PC-9 (cell line): ENCODE measurements at regions of chr2 and their contacts with region 1.

Region 1: GRCh38 chr2:215705771-215706361 is 270.0 kb upstream of the FN1 start:
- DNase-seq: no peak
- H3K4me3 ChIP-seq: no peak overlapping the region
- H3K27ac ChIP-seq: no peak overlapping the region
- H3K4me1 ChIP-seq: 0 out of 2 replicates have a peak, but pooled peaks cover 2% of the 10 kb centered on the region
- H3K27me3 ChIP-seq: no peaks in the 10 kb centered on the region
- CTCF ChIP-seq: no peak

Region 2: GRCh38 chr2:215736653-215737290 is 30.9 kb after region 1 on chr2:
- CTCF ChIA-PET with region 1: no interaction called
- POLR2A ChIA-PET with region 1: interaction called, 10 read pairs
- intact Hi-C with region 1: no loop called
- DNase-seq: no peak
- H3K4me3 ChIP-seq: no peak overlapping the region
- H3K27ac ChIP-seq: no peak overlapping the region
- H3K4me1 ChIP-seq: no peaks in the 10 kb centered on the region
- H3K27me3 ChIP-seq: no peaks in the 10 kb centered on the region
- CTCF ChIP-seq: peak; percentile 31; the same call in 1 of the 2 replicates